ENCODE measurements at regions of chr10 and their contacts with region 1.

Region 1: DNA sequence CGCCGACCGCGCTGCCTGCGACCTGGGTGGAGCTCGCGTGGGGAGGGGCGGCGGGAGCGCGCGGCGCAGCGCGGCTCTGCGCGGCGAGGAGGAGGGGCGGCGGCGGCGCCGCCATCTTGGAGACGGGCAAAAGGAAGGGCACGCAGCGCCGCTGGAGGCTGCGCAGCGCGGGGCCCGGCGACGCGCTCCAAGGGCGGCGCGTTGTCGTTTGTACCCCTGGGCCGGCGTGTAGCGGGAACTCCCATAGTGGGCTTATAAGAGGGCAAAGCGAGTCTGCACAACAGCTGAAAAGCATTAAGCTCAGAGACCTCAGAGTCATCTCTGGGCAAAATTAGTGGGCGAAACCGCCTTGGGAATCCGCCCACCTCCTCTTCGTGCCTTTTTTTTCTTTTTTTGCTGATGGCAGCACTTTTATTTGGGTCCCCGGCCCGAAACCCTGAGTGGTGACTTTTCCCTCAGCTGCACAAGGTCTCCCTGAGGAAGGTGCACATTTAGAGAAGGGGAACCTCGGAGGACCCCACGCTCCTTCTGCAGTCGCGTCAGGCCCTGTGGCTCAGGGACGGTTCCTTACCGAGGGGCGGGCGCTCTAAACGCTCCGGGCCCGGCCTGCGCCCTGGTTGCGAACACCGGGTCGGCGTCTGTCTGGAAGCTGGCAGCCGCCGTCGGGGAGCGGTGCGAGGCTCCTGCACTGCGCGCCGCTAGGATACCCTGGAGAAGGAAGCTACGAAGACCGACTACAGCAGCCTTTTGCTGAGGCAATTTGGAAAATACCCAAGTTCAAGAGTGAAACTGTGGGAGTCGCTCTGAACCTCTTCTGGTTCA is 428 bp upstream of the MCMBP start:
- DNase-seq: peak; percentile 96

Region 2: GRCh38 chr10:119892188-119893065 is 19.4 kb after region 1 on chr10 and contains the start of gene SEC23IP:
- intact Hi-C with region 1: loop called (anchors 1 kb)
- DNase-seq: peak; percentile 99
- total RNA-seq, gene SEC23IP: 30.7 TPM